ENCODE measurements at regions of chr4 and their contacts with region 1.

Region 1: GRCh38 chr4:70993181-70994068 is at the start of gene DCK:
- DNase-seq: peak; percentile 77
- ATAC-seq: peak; percentile 92
- H3K4me3 ChIP-seq: peak within 1 kb of the TSS; percentile 95
- H3K27ac ChIP-seq: peak within 1 kb of the TSS; percentile 62
- H3K4me1 ChIP-seq: peaks cover 0 to 20% of the 10 kb centered on the region in 2 experiments; a peak in 3 of 4 replicates
- H3K27me3 ChIP-seq: no peaks in the 10 kb centered on the region
- CTCF ChIP-seq: no peak
- POLR2A ChIP-seq: peak; percentile 59
- RAD21 ChIP-seq: no peak
- total RNA-seq, gene DCK: 23.0 TPM

Region 2: GRCh38 chr4:70666369-70666768 is 327.1 kb before region 1 on chr4 and contains the start of gene JCHAIN:
- CTCF ChIA-PET with region 1: no interaction called
- POLR2A ChIA-PET with region 1: no interaction called
- RAD21 ChIA-PET with region 1: no interaction called
- intact Hi-C with region 1: no loop called
- DNase-seq: no peak
- ATAC-seq: no peak
- H3K4me3 ChIP-seq: no peak within 1 kb of the TSS
- H3K27ac ChIP-seq: no peak within 1 kb of the TSS
- H3K4me1 ChIP-seq: no peaks in the 10 kb centered on the region
- H3K27me3 ChIP-seq: no peaks in the 10 kb centered on the region
- CTCF ChIP-seq: no peak
- POLR2A ChIP-seq: no peak
- RAD21 ChIP-seq: no peak
- total RNA-seq, gene JCHAIN: 0.79 TPM

Region 3: GRCh38 chr4:70687821-70688794 is 305.3 kb before region 1 on chr4 and contains the start of gene UTP3:
- CTCF ChIA-PET with region 1: no interaction called
- POLR2A ChIA-PET with region 1: no interaction called
- RAD21 ChIA-PET with region 1: no interaction called
- intact Hi-C with region 1: loop called (anchors 10 kb)
- DNase-seq: peak; percentile 99
- ATAC-seq: peak; percentile 95
- H3K4me3 ChIP-seq: peak within 1 kb of the TSS; percentile 98 to 99
- H3K27ac ChIP-seq: peak within 1 kb of the TSS; percentile 86
- H3K4me1 ChIP-seq: peaks cover 11 to 16% of the 10 kb centered on the region in 2 experiments
- H3K27me3 ChIP-seq: no peaks in the 10 kb centered on the region
- CTCF ChIP-seq: peak; percentile 75 to 96 (median 95)
- POLR2A ChIP-seq: peak; percentile 80
- RAD21 ChIP-seq: peak; percentile 65
- total RNA-seq, gene UTP3: 33.7 TPM

Region 4: DNA sequence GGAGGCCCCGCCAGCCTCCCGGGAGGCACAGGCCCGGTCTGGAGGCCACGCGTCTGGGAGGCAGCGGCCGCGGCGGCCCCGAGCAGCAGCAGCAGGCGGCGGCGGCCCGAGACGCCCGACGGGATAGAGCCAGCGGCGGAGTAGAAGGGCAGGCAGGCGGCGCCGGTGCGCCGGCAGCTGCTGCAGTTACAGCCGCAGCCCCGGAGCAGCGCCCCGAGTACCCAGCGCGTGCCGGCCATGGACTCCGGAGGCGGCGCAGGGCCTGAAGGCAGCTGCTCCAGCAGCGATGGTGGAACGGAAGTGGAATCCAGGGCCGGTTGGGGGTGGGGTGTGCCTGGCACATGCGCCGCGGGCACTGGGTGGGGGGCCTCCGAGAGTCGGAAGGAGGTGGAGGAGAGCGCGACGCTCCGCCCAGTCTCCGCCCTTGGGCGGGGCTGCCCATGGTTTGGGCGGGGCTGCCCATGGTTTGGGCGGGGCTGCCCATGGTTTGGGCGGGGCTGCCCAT is 153.8 kb before region 1 on chr4 and contains the start of gene GRSF1:
- CTCF ChIA-PET with region 1: no interaction called
- POLR2A ChIA-PET with region 1: interaction called, 3 read pairs
- RAD21 ChIA-PET with region 1: no interaction called
- intact Hi-C with region 1: loop called (anchors 5 kb)
- DNase-seq: peak; percentile 82
- ATAC-seq: peak; percentile 90
- H3K4me3 ChIP-seq: peak within 1 kb of the TSS; percentile 91 to 98
- H3K27ac ChIP-seq: peak within 1 kb of the TSS; percentile 97
- H3K4me1 ChIP-seq: peaks cover 3 to 15% of the 10 kb centered on the region in 2 experiments; a peak in 3 of 4 replicates
- H3K27me3 ChIP-seq: no peaks in the 10 kb centered on the region
- CTCF ChIP-seq: no peak
- POLR2A ChIP-seq: peak; percentile 73
- RAD21 ChIP-seq: no peak
- total RNA-seq, gene GRSF1: 131 TPM

Region 5: DNA sequence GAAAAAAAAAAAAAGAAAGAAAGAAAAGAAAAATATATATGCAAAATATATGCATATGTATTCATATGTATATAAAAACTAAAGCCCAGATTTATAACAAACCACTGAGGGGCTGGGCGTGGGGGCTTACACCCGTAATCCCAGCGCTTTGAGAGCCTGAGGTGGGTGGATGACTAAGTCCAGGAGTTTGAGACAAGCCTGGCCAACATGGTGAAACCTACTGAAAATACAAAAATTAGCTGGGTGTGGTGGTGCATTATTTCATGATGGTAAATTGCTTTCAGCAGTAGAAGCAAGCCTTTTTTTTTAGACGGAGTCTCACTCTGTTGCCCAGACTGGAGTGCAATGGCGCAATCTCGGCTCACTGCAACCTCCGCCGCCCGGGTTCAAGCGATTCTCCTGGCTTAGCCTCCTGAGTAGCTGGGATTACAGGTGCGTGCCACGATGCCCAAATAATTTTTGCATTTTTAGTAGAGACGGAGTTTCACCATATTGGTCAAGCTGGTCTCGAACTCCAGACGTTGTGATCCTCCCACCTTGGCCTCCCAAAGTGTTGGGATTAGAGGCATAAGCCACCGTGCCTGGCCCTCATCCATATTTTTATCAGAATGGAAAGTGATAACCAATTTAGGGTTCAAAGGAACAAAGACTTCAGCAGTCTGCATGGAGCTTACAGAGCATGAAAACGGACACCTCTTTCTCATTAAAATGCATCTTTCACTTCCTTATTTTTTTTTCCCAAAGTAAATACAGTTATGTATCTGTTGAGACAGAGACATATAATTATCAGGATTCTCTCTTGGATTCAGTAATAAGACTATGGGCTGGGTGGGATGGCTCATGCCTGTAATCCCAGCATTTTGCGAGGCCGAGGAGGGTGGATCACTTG is 118.9 kb before region 1 on chr4:
- CTCF ChIA-PET with region 1: no interaction called
- POLR2A ChIA-PET with region 1: no interaction called
- RAD21 ChIA-PET with region 1: no interaction called
- intact Hi-C with region 1: no loop called
- DNase-seq: no peak
- ATAC-seq: no peak
- H3K4me3 ChIP-seq: no peak overlapping the region
- H3K27ac ChIP-seq: no peak overlapping the region
- H3K4me1 ChIP-seq: no peaks in the 10 kb centered on the region
- H3K27me3 ChIP-seq: no peaks in the 10 kb centered on the region
- CTCF ChIP-seq: no peak
- POLR2A ChIP-seq: no peak
- RAD21 ChIP-seq: no peak

Region 6: DNA sequence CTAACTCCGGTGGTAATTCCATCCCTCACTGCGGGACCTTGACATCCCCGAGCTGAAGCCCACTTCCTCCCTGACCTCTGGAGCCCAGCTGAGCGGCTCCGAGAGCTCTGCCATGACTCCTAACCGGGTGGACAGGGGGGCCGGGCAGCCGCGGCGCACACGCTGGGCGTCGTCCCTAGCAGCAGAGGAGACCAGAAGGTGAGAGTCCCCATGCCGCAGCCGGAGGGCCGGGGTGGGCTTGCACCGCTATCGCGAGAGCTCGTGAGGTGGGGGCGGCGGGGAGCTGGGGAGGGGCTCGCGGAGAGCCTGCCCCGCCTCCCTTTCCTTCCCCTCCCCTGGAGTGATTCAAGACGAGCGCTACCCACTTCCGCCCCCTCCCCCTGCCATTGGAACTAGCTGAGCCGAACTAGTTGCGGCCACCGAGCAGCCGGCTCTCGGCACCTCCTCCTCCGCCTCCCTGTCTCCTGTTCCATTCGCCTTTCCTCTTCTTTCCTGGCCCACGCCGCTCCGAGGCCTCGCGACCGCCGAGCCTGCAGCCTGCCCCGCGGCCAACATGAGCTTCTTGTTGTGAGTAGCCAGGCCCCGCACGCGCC is 91.3 kb before region 1 on chr4 and contains the start of gene MOB1B:
- CTCF ChIA-PET with region 1: no interaction called
- POLR2A ChIA-PET with region 1: no interaction called
- RAD21 ChIA-PET with region 1: no interaction called
- intact Hi-C with region 1: loop called (anchors 5 kb)
- DNase-seq: peak; percentile 59
- ATAC-seq: peak; percentile 91
- H3K4me3 ChIP-seq: peak within 1 kb of the TSS; percentile 78 to 85
- H3K27ac ChIP-seq: peak within 1 kb of the TSS; percentile 35
- H3K4me1 ChIP-seq: peaks cover 4 to 16% of the 10 kb centered on the region in 2 experiments
- H3K27me3 ChIP-seq: no peaks in the 10 kb centered on the region
- CTCF ChIP-seq: 0 out of 6 replicates have a peak, but pooled peaks of 1 of the 3 experiments have one; percentile 11
- POLR2A ChIP-seq: peak; percentile 46
- RAD21 ChIP-seq: no peak
- total RNA-seq, gene MOB1B: 33.2 TPM

Region 7: GRCh38 chr4:71009890-71010588 is 16.6 kb after region 1 on chr4:
- CTCF ChIA-PET with region 1: interaction called, 28 read pairs
- POLR2A ChIA-PET with region 1: interaction called, 8 read pairs
- RAD21 ChIA-PET with region 1: interaction called in 1 of 2 experiments, 3 read pairs
- intact Hi-C with region 1: no loop called
- DNase-seq: peak; percentile 39
- ATAC-seq: peak; percentile 63; the same call in 1 of the 2 replicates
- H3K4me3 ChIP-seq: no peak overlapping the region
- H3K27ac ChIP-seq: no peak overlapping the region
- H3K4me1 ChIP-seq: peaks cover 0 to 6% of the 10 kb centered on the region in 2 experiments; a peak in 2 of 4 replicates
- H3K27me3 ChIP-seq: no peaks in the 10 kb centered on the region
- CTCF ChIP-seq: peak; percentile 46 to 90 (median 52); a peak in 5 of 6 replicates
- POLR2A ChIP-seq: no peak
- RAD21 ChIP-seq: peak; percentile 50